Esophagus squamous epithelium (tissue), 5 donors: ENCODE measurements at regions of chr3 and their contacts with region 1.

Region 1: GRCh38 chr3:111859974-111860859 is 1.2 kb downstream of the PHLDB2 start:
- DNase-seq: peak; percentile 22
- H3K4me3 ChIP-seq: peak overlapping the region; percentile 59 to 89 (median 75)
- H3K27ac ChIP-seq: peak overlapping the region; percentile 85 to 96 (median 94)
- H3K4me1 ChIP-seq: peaks cover 0 to 62% (median 31%) of the 10 kb centered on the region in 3 donors
- H3K27me3 ChIP-seq: no peaks in the 10 kb centered on the region
- CTCF ChIP-seq: peak; percentile 24 to 83 (median 60)
- POLR2A ChIP-seq: peak in 3 of 4 donors; percentile 43 to 69 (median 67)

Region 2: GRCh38 chr3:111723293-111724215 is 136.7 kb before region 1 on chr3:
- intact Hi-C with region 1: loop called (anchors 5 kb)
- DNase-seq: no peak
- H3K4me3 ChIP-seq: no peak overlapping the region
- H3K27ac ChIP-seq: peak overlapping the region in 2 of 4 donors; percentile 10 to 45
- H3K4me1 ChIP-seq: peaks cover 0 to 3% (median 0%) of the 10 kb centered on the region in 3 donors
- H3K27me3 ChIP-seq: no peaks in the 10 kb centered on the region
- CTCF ChIP-seq: no peak
- POLR2A ChIP-seq: no peak